K562 (cell line): ENCODE measurements at regions of chr7 and their contacts with region 1.

Region 1: GRCh38 chr7:5526100-5526905 is 102.7 kb upstream of the TNRC18 start:
- DNase-seq: peak in 1 of 4 experiments; percentile 29
- ATAC-seq: peak; percentile 41
- H3K4me3 ChIP-seq: no peak overlapping the region
- H3K27ac ChIP-seq: 0 out of 3 replicates have a peak overlapping the region, but pooled peaks have one; percentile 9
- H3K4me1 ChIP-seq: peaks cover 18 to 30% of the 10 kb centered on the region in 2 experiments
- H3K27me3 ChIP-seq: no peaks in the 10 kb centered on the region
- CTCF ChIP-seq: peak; percentile 25 to 45 (median 28); a peak in 2 of 6 replicates
- EP300 ChIP-seq: no peak; the same call in none of the 2 replicates
- POLR2A ChIP-seq: peak; percentile 97
- RAD21 ChIP-seq: peak; percentile 42 to 49

Region 2: GRCh38 chr7:4809091-4809591 is 717.2 kb before region 1 on chr7:
- CTCF ChIA-PET with region 1: no interaction called
- POLR2A ChIA-PET with region 1: no interaction called
- in situ Hi-C with region 1: no loop called
- intact Hi-C with region 1: no loop called
- DNase-seq: no peak
- ATAC-seq: no peak
- H3K4me3 ChIP-seq: no peak overlapping the region
- H3K27ac ChIP-seq: no peak overlapping the region
- H3K4me1 ChIP-seq: peaks cover 0 to 12% of the 10 kb centered on the region in 2 experiments; a peak in 2 of 5 replicates
- H3K27me3 ChIP-seq: peaks cover 0 to 4% of the 10 kb centered on the region in 2 experiments; a peak in 2 of 5 replicates
- CTCF ChIP-seq: no peak
- EP300 ChIP-seq: no peak
- POLR2A ChIP-seq: no peak
- RAD21 ChIP-seq: no peak

Region 3: DNA sequence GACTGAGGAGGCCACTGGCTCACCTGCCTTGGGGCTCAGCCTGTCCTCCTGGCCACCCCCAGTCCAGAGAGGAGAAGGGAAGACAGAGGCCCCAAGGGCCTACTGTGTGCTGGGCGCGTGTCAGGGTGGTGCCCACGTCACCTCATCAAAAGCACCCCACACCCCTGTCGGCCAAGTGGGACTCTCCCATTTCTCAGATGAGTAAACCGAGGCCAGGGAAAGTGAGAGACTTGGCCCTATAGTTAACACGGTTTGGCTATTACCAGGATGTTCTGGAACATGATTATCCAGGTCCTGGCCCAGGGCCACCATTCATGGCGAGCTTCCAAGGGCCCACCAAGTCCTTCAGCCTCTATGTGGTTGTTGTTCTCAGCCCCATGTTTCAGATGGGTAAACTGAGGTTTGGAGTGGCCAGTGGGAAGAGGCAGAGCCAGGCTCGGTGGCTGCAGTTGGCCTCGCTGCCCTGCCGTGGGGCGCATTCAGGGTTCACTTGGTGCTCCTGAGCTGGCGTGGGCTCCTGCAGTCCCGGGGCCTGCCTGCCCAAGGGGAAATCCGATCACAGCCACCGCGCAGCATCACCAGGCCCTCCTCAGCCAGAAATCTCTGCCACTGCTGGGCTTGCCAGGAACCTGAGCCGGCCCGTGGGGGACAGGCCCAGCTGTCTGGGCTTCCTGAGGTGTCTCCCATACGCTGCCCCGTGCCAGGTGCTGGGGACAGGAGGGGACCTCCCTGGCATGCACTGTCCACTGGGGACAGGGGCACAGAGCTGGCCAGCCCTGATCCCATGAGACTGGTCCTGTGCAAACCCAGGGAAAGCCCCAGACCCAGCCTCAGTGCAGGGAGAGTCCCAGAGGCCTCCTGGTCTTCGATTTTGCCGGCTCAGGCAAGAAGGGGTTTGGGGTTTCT is 15.0 kb after region 1 on chr7:
- CTCF ChIA-PET with region 1: no interaction called
- POLR2A ChIA-PET with region 1: interaction called, 41 read pairs
- in situ Hi-C with region 1: no loop called
- intact Hi-C with region 1: no loop called
- DNase-seq: no peak
- ATAC-seq: no peak
- H3K4me3 ChIP-seq: no peak overlapping the region
- H3K27ac ChIP-seq: no peak overlapping the region
- H3K4me1 ChIP-seq: peaks cover 0 to 28% of the 10 kb centered on the region in 2 experiments; a peak in 2 of 5 replicates
- H3K27me3 ChIP-seq: no peaks in the 10 kb centered on the region
- CTCF ChIP-seq: no peak
- EP300 ChIP-seq: no peak
- POLR2A ChIP-seq: no peak
- RAD21 ChIP-seq: no peak

Region 4: DNA sequence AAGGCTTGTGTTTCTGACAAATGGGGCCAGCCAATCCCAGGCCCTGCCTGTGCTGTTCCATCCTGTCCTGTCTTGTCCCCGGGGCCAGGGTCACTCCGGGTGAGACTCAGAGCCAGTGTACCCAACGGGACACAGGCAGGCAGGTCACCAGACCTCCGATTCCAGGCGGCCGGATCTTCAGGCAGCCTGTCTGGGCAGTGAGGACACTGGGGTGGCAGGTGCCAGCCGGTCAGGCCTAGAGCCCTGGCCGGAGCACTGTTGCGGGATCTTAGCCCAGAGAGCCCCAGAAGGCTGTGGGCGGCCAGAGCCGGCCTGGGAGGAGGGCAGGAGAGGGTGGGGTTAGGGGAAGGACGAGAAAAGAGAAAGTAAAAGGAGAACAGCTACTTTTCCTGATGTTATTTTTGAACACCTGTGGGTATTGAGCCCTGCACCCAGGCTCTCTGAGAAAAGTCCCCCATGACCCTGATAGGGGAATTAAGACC is 31.7 kb after region 1 on chr7:
- CTCF ChIA-PET with region 1: interaction called, 5 read pairs
- POLR2A ChIA-PET with region 1: interaction called, 71 read pairs
- in situ Hi-C with region 1: no loop called
- intact Hi-C with region 1: no loop called
- DNase-seq: peak in 3 of 4 experiments; percentile 9 to 48 (median 47)
- ATAC-seq: 0 out of 3 replicates have a peak, but pooled peaks have one; percentile 3
- H3K4me3 ChIP-seq: no peak overlapping the region
- H3K27ac ChIP-seq: peak overlapping the region; percentile 42; the same call in 2 of the 3 replicates
- H3K4me1 ChIP-seq: peaks cover 49 to 77% of the 10 kb centered on the region in 2 experiments
- H3K27me3 ChIP-seq: no peaks in the 10 kb centered on the region
- CTCF ChIP-seq: no peak
- EP300 ChIP-seq: no peak
- POLR2A ChIP-seq: no peak
- RAD21 ChIP-seq: no peak

Region 5: DNA sequence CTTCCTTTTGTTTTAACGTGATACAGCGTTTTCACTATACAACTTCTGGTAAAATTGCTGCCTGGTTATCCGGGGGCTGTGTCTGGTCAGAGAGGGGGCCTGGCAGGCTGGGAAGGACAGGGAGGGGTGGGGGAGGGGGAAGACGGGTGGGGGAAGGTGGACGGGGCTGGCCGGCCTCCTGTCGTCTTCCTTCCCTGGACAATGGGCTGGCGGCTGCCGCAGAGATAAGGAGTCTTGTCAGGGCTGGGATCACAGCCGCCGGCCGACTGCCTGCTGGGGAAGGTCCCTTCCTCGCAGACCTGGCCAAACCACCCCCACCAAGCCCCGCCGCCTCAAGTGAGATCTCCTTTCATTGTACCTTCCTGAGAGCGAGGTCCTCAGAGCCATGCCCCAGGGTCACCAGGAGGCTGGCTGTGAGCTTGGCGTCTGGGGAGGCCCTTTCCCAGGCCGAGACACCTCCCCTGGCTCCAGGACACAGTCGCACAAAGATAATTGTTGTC is 48.5 kb after region 1 on chr7:
- CTCF ChIA-PET with region 1: no interaction called
- POLR2A ChIA-PET with region 1: interaction called, 11 read pairs
- in situ Hi-C with region 1: no loop called
- intact Hi-C with region 1: no loop called
- DNase-seq: peak; percentile 87 to 95 (median 89)
- ATAC-seq: peak; percentile 78
- H3K4me3 ChIP-seq: peak overlapping the region; percentile 30
- H3K27ac ChIP-seq: peak overlapping the region; percentile 100
- H3K4me1 ChIP-seq: peaks cover 25 to 64% of the 10 kb centered on the region in 2 experiments
- H3K27me3 ChIP-seq: no peaks in the 10 kb centered on the region
- CTCF ChIP-seq: no peak
- EP300 ChIP-seq: peak; percentile 71
- POLR2A ChIP-seq: peak; percentile 64
- RAD21 ChIP-seq: 0 out of 4 replicates have a peak, but pooled peaks of 1 of the 2 experiments have one; percentile 9

Region 6: DNA sequence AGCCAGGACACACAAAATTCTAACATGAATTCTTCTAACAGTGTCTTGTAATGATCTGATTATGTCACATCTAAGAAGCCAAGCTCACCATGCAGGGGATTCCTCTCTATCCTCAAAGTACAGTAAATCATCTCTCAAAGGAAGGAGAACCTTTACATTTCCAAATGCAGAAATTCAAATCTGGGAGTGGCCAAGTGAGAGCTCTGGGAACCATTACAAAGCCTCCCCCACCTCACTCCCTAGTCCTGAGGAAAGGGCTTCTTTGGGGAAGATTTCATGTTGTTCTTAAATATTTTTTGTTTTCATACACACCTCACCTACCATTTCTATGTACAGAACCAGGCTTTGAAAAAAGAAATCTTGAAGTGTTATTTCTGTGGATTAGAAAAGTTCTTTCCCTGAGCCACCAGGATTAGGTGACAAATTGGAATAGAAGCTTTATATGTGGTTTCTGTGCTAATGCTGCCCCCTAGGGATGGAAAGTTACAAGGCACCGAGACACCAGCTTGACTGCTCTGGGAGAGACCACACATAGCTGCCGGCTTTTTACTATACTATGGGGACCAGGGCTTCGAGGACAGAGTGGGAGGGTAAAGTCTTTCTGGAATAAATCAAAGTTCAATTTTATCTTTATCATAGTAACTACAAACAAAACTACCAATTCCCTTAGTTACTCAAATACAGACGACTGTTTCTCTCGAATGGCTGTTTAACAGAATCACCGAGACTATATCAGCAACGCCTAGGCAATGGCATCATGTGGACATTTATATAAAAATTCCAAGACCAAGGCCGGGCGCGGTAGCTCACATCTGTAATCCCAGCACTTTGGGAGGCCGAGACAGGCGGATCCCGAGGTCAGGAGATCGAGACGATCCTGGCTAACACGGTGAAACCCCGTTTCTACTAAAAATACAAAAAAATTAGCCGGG is 139.1 kb after region 1 on chr7:
- CTCF ChIA-PET with region 1: no interaction called
- POLR2A ChIA-PET with region 1: interaction called, 37 read pairs
- in situ Hi-C with region 1: no loop called
- intact Hi-C with region 1: no loop called
- DNase-seq: peak; percentile 71 to 88 (median 77)
- ATAC-seq: peak; percentile 96
- H3K4me3 ChIP-seq: no peak overlapping the region
- H3K27ac ChIP-seq: no peak overlapping the region
- H3K4me1 ChIP-seq: peaks cover 5 to 13% of the 10 kb centered on the region in 2 experiments; a peak in 4 of 5 replicates
- H3K27me3 ChIP-seq: no peaks in the 10 kb centered on the region
- CTCF ChIP-seq: peak; percentile 84 to 89 (median 85)
- EP300 ChIP-seq: 0 out of 2 replicates have a peak, but pooled peaks have one; percentile 10
- POLR2A ChIP-seq: no peak
- RAD21 ChIP-seq: peak; percentile 94 to 97

Region 7: GRCh38 chr7:5677538-5678294 is 151.4 kb after region 1 on chr7:
- CTCF ChIA-PET with region 1: no interaction called
- POLR2A ChIA-PET with region 1: interaction called, 14 read pairs
- in situ Hi-C with region 1: no loop called
- intact Hi-C with region 1: no loop called
- DNase-seq: peak; percentile 57 to 67 (median 62)
- ATAC-seq: peak; percentile 86
- H3K4me3 ChIP-seq: no peak overlapping the region
- H3K27ac ChIP-seq: no peak overlapping the region
- H3K4me1 ChIP-seq: peaks cover 0 to 4% of the 10 kb centered on the region in 2 experiments; a peak in 2 of 5 replicates
- H3K27me3 ChIP-seq: no peaks in the 10 kb centered on the region
- CTCF ChIP-seq: peak; percentile 71 to 79 (median 77)
- EP300 ChIP-seq: no peak
- POLR2A ChIP-seq: no peak
- RAD21 ChIP-seq: peak; percentile 63 to 79